ENCODE measurements at regions of chr6 and their contacts with region 1.

Region 1: GRCh38 chr6:10694302-10695085 is at the starts of genes C6orf52 and PAK1IP1:
- DNase-seq: peak; percentile 98
- total RNA-seq, gene C6orf52: not detected
- total RNA-seq, gene PAK1IP1: 12.4 to 14.9 TPM

Region 2: DNA sequence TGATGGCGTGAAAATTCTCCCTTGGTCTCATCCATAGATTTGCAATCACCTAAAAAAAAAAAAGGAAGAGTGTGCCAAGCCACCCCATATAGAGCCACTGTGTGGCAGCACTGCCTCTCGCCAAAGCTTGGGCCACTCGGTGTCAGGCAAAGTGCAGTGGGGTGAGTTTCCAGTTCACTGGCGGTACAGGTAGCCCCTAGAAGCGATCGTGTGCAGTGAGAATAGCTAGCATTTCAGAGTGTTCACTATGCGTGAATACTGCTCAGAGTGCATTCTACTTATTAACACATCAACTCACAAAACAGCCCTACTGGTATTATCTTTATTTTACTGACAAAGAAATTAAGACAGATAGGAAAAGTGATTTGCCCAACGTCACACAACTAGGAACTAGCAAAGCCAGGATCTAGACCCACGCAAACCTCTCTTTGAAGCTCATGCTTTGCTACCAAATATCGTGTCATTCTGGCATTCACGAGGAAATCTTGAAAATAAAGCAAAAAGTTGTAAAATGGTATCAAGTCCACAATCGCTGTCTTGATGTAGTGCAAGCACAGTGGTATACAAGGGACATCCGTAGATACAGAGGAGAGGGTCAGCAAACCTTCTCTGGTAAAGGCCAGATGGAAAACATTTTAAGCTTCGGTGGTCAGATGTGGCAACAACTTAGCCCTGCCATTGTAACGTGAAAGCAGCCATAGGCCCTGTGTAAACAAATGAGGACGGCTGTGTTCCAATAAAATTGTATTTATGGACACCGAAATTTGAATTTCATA is 183.7 kb before region 1 on chr6:
- intact Hi-C with region 1: loop called in 1 of 2 experiments (anchors 10 kb)
- DNase-seq: no peak

Region 3: DNA sequence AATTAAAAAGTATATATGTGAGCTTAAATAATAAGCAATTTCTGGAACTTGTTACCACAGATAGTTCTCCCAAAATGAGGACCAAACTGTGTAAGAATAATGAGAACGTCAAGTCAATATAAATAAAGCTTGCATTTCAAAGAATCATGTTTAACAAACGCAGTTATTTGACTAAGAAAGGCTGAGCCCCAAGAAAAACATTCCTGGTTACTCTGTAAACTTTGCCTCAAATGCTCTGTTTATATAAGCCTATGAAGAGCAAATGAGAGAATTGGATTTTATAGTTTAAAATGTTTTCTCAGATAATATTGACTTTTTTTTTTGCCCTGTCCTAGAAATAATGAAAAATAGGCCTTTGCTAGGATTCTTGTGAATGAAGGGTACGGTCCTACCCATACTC is 81.4 kb before region 1 on chr6:
- intact Hi-C with region 1: loop called in 1 of 2 experiments (anchors 2 kb)
- DNase-seq: no peak

Measured in posterior vena cava (tissue), 2 donors.